Psoas muscle (tissue), 8 donors: ENCODE measurements at regions of chr4 and their contacts with region 1.

Region 1: DNA sequence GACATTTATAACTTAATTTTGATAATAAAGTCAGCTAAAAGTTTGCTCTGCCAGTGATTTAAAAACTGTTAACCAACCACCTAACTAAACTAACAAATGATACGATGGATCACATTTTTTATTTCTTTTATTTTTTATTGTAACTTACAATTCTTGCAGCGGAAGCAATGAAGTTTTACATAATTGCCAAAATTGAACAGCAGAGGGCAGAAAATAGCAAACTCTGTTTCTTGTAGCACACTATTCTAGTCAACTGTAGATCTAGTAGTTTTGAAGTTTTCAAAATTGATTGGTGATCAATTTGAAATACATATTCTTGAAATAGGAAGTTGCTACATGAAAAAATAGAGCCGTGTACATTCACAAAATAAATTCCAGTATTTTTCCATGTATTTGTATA is 2.8 kb upstream of the GRIA2 start:
- DNase-seq: no peak
- ATAC-seq: no peak
- H3K4me3 ChIP-seq: no peak overlapping the region
- H3K27ac ChIP-seq: no peak overlapping the region
- H3K4me1 ChIP-seq: peaks cover 11% of the 10 kb centered on the region
- H3K27me3 ChIP-seq: peaks cover 4 to 39% (median 15%) of the 10 kb centered on the region in 3 donors
- CTCF ChIP-seq: peak; percentile 43

Region 2: GRCh38 chr4:157978680-157979361 is 761.1 kb after region 1 on chr4:
- intact Hi-C with region 1: loop called (anchors 2 to 10 kb)
- DNase-seq: peak; percentile 14 to 51
- ATAC-seq: peak in 3 of 4 donors; percentile 34 to 77 (median 71)
- H3K4me3 ChIP-seq: no peak overlapping the region
- H3K27ac ChIP-seq: no peak overlapping the region
- H3K4me1 ChIP-seq: no peaks in the 10 kb centered on the region
- H3K27me3 ChIP-seq: no peaks in the 10 kb centered on the region
- CTCF ChIP-seq: peak; percentile 82